ENCODE measurements at regions of chr17 and their contacts with region 1.

Region 1: DNA sequence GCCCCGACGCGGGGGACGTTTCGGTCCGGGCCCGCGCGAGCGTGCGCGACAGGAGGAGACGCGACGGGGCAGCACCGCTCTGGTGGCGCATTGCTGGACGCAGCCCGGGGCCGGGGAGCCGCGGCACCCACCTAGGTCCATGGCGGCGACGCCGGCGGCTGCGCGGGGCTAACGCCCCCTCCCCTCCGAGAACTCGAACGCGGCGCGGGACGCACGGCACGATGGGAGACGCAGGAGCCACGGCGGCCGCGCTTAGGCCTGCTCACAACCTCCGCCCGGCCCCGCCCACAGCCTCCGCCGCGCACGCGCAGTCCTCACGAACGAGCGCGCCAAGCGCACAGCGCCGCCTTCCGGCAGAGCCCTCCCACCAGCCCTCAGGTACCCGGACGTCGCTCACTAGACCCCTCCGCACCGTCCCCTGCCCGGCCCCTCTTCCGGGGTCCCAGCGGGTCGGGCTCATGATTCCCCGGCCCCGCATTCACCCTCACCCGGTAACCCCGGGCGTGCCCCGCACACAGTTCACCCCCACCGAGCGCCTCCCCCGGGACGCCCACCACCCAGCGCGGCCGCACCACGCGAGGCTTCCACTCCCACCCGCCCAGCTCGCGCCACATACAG is at the start of gene GEMIN4:
- DNase-seq: peak; percentile 81 to 86
- ATAC-seq: peak; percentile 95 to 97
- H3K4me3 ChIP-seq: peak within 1 kb of the TSS; percentile 90 to 99 (median 91)
- H3K27ac ChIP-seq: peak within 1 kb of the TSS; percentile 74 to 87 (median 85)
- H3K4me1 ChIP-seq: peaks cover 12 to 19% of the 10 kb centered on the region in 2 donors
- H3K27me3 ChIP-seq: no peaks in the 10 kb centered on the region
- CTCF ChIP-seq: peak; percentile 88 to 97 (median 94)
- POLR2A ChIP-seq: peak; percentile 70 to 73
- total RNA-seq, gene GEMIN4: 10.6 to 21.6 (median 18.9) TPM

Region 2: DNA sequence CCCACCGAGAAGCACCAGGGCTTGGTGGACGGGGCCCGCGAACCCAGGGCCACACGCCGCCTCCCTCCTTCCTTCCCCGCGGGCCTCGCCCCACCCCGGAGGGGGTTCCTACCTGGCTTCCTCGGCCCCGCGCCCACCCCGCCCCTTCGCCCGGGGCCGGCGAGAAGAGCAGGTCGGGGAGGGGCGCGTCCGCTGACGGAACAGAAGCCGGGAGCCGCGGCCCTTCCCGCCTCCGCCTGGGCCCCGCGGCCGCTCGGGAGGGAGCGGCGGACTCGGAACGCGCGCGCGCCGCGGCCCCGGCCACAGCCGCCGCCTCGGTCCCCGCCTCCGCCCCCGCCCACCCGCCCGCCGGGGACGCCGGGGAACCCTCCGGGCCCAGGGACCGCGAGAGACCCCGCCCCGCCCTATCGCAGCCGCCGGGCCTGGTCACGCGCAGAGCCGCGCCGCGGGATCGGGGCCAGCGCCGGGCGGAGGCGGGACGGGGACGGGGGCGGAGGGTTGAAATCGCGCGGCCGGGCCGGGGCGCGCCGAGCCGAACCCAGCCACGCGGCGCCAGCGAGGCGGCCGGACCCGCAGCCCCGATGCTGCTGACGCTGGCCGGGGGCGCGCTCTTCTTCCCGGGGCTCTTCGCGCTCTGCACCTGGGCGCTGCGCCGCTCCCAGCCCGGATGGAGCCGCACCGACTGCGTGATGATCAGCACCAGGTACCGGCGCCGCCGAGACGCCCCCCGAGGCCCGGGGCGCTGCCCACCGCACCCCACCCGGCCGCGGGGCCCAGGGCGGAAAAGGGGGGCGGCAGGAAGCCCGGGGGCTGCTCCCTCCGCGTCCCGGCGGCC is 19.8 kb before region 1 on chr17 and contains the start of gene TLCD3A:
- in situ Hi-C with region 1: no loop called
- intact Hi-C with region 1: no loop called
- DNase-seq: peak; percentile 40 to 45
- ATAC-seq: peak; percentile 65 to 72
- H3K4me3 ChIP-seq: peak within 1 kb of the TSS; percentile 67 to 77 (median 74)
- H3K27ac ChIP-seq: peak within 1 kb of the TSS; percentile 56 to 71 (median 66)
- H3K4me1 ChIP-seq: peaks cover 9 to 12% of the 10 kb centered on the region in 2 donors
- H3K27me3 ChIP-seq: no peaks in the 10 kb centered on the region
- CTCF ChIP-seq: no peak
- POLR2A ChIP-seq: peak in 1 of 2 donors; percentile 37
- total RNA-seq, gene TLCD3A: 0.39 to 1.4 (median 0.86) TPM

Region 3: GRCh38 chr17:781805-782731 is 30.0 kb after region 1 on chr17 and contains the starts of genes GLOD4 and MRM3:
- in situ Hi-C with region 1: no loop called
- intact Hi-C with region 1: loop called (anchors 1 kb)
- DNase-seq: peak; percentile 79 to 90
- ATAC-seq: peak; percentile 95
- H3K4me3 ChIP-seq: peak within 1 kb of the TSS; percentile 89 to 98 (median 96)
- H3K27ac ChIP-seq: peak within 1 kb of the TSS; percentile 93 to 95 (median 94)
- H3K4me1 ChIP-seq: peaks cover 23 to 24% of the 10 kb centered on the region in 2 donors
- H3K27me3 ChIP-seq: no peaks in the 10 kb centered on the region
- CTCF ChIP-seq: peak in 4 of 5 experiments; percentile 12 to 64 (median 44)
- POLR2A ChIP-seq: peak; percentile 65 to 76
- total RNA-seq, gene GLOD4: 17.6 to 38.1 (median 22.8) TPM
- total RNA-seq, gene MRM3: 24.2 to 58.2 (median 33.0) TPM

Region 4: GRCh38 chr17:1143573-1143972 is 391.5 kb after region 1 on chr17:
- in situ Hi-C with region 1: no loop called
- intact Hi-C with region 1: no loop called
- DNase-seq: no peak
- ATAC-seq: no peak
- H3K4me3 ChIP-seq: no peak overlapping the region
- H3K27ac ChIP-seq: no peak overlapping the region
- H3K4me1 ChIP-seq: no peaks in the 10 kb centered on the region
- H3K27me3 ChIP-seq: peaks cover 0 to 5% (median 0%) of the 10 kb centered on the region in 3 donors
- CTCF ChIP-seq: no peak
- POLR2A ChIP-seq: no peak

Measured in gastrocnemius medialis (tissue), 4 donors.